Transverse colon (tissue), 4 donors: ENCODE measurements at regions of chr1 and their contacts with region 1.

Region 1: GRCh38 chr1:45490626-45491486 is at the start of gene TESK2:
- DNase-seq: peak; percentile 98
- H3K4me3 ChIP-seq: peak within 1 kb of the TSS; percentile 50 to 99 (median 76)
- H3K27ac ChIP-seq: peak within 1 kb of the TSS; percentile 86 to 94 (median 91)
- H3K4me1 ChIP-seq: peaks cover 0 to 16% (median 3%) of the 10 kb centered on the region in 4 donors
- H3K27me3 ChIP-seq: no peaks in the 10 kb centered on the region
- CTCF ChIP-seq: peak in 3 of 5 experiments; percentile 20 to 70 (median 44)
- EP300 ChIP-seq: no peak
- POLR2A ChIP-seq: peak; percentile 90
- total RNA-seq, gene TESK2: 5.2 to 32.2 (median 14.5) TPM

Region 2: DNA sequence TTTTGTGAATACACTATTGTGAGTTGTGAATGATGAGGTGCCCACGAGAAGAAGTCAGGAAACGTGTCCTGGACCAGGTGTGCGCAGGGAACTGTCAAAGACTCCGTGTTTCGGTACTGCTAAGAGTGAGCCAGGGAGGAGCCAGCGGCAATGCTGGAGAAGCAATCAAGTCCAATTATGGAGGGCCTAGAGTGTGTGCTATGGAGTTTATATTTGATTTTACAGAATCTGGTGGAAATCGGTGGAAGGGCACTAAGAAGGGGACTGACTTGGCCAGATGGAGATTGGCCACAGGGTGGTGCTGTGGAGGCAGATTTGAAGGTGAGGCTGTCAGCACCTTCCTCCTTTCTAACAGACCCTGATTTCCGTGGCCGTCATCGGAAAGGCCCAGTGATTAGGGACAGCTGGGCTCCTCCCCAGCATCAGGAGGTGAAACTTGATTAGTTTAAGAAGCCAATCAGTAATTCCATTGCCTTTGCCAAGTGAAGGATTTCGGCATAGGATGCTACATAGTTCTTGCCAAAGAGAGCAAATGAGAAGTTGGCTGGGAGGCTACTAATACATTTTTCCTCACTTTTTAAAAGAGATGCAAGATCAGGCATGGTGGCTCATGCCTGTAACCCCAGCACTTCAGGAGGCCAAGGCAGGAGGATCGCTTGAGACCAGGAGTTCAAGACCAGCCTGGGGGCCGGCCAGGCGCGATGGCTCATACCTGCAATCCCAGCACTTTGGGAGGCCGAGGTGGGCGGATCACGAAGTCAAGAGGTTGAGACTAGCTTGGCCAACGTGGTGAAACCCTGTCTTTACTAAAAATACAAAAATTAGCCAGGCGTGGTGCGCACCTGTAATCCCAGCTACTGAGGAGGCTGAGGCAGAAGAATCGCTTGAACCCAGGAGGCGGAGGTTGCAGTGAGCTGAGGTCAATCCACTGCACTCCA is 654.8 kb before region 1 on chr1:
- in situ Hi-C with region 1: loop called in 1 of 4 experiments (anchors 25 kb)
- intact Hi-C with region 1: no loop called
- DNase-seq: peak; percentile 90
- H3K4me3 ChIP-seq: no peak overlapping the region
- H3K27ac ChIP-seq: no peak overlapping the region
- H3K4me1 ChIP-seq: peaks cover 0 to 6% (median 2%) of the 10 kb centered on the region in 4 donors
- H3K27me3 ChIP-seq: no peaks in the 10 kb centered on the region
- CTCF ChIP-seq: peak; percentile 76 to 85 (median 81)
- EP300 ChIP-seq: no peak
- POLR2A ChIP-seq: no peak

Region 3: GRCh38 chr1:45353685-45354084 is 137.2 kb before region 1 on chr1:
- in situ Hi-C with region 1: loop called in 3 of 4 experiments (anchors 5 to 10 kb)
- intact Hi-C with region 1: loop called (anchors 5 kb)
- DNase-seq: no peak
- H3K4me3 ChIP-seq: no peak overlapping the region
- H3K27ac ChIP-seq: no peak overlapping the region
- H3K4me1 ChIP-seq: peaks cover 0 to 6% (median 0%) of the 10 kb centered on the region in 4 donors
- H3K27me3 ChIP-seq: no peaks in the 10 kb centered on the region
- CTCF ChIP-seq: no peak
- EP300 ChIP-seq: no peak
- POLR2A ChIP-seq: no peak

Region 4: GRCh38 chr1:45359882-45360513 is 130.9 kb before region 1 on chr1:
- in situ Hi-C with region 1: loop called (anchors 5 to 10 kb)
- intact Hi-C with region 1: no loop called
- DNase-seq: peak; percentile 71
- H3K4me3 ChIP-seq: no peak overlapping the region
- H3K27ac ChIP-seq: peak overlapping the region; percentile 73 to 76 (median 74)
- H3K4me1 ChIP-seq: peaks cover 9 to 22% (median 15%) of the 10 kb centered on the region in 4 donors
- H3K27me3 ChIP-seq: no peaks in the 10 kb centered on the region
- CTCF ChIP-seq: peak; percentile 67 to 85 (median 71)
- EP300 ChIP-seq: no peak
- POLR2A ChIP-seq: no peak

Region 5: DNA sequence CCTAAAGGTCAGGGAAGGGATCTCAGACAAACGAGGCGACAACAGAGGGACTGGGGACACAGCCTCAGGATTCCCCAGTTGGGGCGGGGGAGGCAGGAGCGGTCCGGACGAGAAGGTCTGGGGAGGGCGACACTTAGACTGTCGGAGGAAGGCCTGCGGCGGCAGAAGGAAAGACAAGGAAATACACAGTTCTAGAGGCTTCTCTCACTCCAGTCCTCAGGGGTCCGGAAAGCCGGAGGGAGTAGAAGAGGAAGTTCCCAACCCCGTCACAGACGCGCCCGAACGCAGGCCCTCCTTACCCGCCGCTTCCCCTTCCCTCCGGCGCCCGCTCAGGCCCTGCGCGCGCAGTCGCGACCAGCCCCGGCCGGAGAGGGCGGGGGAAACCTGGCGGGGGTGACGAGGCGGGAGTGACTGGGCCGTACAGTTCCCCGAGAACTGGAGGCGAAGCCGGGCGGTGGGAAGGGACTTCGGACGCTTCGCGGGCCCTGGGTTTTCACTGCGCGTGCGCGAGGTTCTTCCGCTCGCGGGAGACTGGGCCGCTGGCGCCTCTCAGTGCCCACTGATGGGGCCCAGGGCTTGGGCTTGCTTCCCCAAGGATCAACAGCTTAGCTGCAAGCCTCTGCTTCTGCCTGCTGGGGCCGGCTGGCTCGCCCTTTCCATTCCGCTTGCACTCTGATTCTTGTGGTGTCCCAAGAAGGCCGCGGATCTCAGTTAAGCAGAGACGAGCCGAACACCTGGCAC is 259.6 kb after region 1 on chr1 and contains the start of gene IPP:
- in situ Hi-C with region 1: no loop called
- intact Hi-C with region 1: no loop called
- DNase-seq: peak; percentile 97
- H3K4me3 ChIP-seq: peak within 1 kb of the TSS; percentile 53 to 77 (median 66)
- H3K27ac ChIP-seq: peak within 1 kb of the TSS; percentile 93 to 98 (median 98)
- H3K4me1 ChIP-seq: peaks cover 3 to 20% (median 9%) of the 10 kb centered on the region in 4 donors
- H3K27me3 ChIP-seq: no peaks in the 10 kb centered on the region
- CTCF ChIP-seq: peak in 1 of 5 experiments; percentile 8
- EP300 ChIP-seq: no peak
- POLR2A ChIP-seq: peak; percentile 98
- total RNA-seq, gene IPP: 12.8 to 36.4 (median 15.8) TPM